Common myeloid progenitor, CD34-positive (primary cell): ENCODE measurements at regions of chr17 and their contacts with region 1.

Region 1: GRCh38 chr17:82022981-82023374 is at the start of gene LRRC45:
- DNase-seq: peak; percentile 99 to 100 (median 100)
- H3K4me3 ChIP-seq: peak within 1 kb of the TSS; percentile 64 to 85 (median 80)
- H3K27ac ChIP-seq: peak within 1 kb of the TSS in 1 of 2 experiments; percentile 76
- H3K4me1 ChIP-seq: peaks cover 0 to 40% (median 29%) of the 10 kb centered on the region in 4 experiments
- H3K27me3 ChIP-seq: no peaks in the 10 kb centered on the region

Region 2: GRCh38 chr17:81927653-81928543 is 95.1 kb before region 1 on chr17 and contains the start of gene MAFG:
- CTCF ChIA-PET with region 1: interaction called, 15 read pairs
- POLR2A ChIA-PET with region 1: interaction called, 3 read pairs
- DNase-seq: peak; percentile 92 to 95 (median 94)
- H3K4me3 ChIP-seq: peak within 1 kb of the TSS; percentile 46 to 83 (median 77)
- H3K27ac ChIP-seq: peak within 1 kb of the TSS; percentile 92 to 98
- H3K4me1 ChIP-seq: peaks cover 0 to 67% (median 58%) of the 10 kb centered on the region in 4 experiments
- H3K27me3 ChIP-seq: peaks cover 0 to 24% (median 13%) of the 10 kb centered on the region in 5 experiments

Region 3: DNA sequence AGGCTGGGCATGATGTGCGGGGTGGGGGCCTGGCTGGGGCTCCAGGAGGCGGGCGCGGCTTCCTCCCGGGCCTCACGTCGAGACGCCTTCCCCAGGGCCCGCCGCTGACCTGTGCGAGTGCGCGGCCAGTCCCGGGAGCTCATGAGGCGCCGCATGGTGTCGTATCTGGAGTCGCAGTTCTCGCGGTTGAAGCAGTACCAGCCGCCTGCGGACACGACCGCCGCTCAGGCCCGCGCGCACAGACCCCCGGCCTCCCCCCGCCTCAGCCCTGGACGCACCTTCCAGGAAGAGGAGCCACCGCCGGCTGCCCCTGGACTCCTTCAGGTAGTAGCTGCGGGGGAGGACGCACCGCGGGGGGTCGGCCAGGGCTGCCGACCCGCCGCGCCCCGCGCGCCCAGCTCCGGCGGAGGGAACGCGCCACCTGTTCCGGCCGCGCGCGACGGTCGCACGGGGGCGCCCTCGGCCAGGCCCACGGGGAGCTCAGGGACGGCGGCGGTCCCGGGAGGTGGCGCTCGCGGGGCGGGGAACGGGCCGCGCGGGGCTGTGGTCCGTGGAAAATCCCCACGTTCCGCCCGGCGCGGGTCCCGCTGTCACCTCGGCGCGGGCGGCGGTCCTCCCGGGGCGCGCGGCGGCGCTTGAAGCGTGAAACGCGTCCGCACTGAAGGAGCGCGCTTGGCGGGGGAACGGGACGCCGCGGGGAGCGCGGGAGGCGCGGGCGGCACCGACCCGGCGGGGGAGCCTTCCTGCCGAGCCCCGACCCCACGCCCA is 63.4 kb before region 1 on chr17:
- CTCF ChIA-PET with region 1: interaction called, 117 read pairs
- POLR2A ChIA-PET with region 1: interaction called, 11 read pairs
- DNase-seq: peak; percentile 54 to 73 (median 72)
- H3K4me3 ChIP-seq: peak overlapping the region in 6 of 7 experiments; percentile 9 to 61 (median 40)
- H3K27ac ChIP-seq: no peak overlapping the region
- H3K4me1 ChIP-seq: peaks cover 0 to 22% (median 19%) of the 10 kb centered on the region in 4 experiments
- H3K27me3 ChIP-seq: peaks cover 0 to 63% (median 21%) of the 10 kb centered on the region in 5 experiments

Region 4: DNA sequence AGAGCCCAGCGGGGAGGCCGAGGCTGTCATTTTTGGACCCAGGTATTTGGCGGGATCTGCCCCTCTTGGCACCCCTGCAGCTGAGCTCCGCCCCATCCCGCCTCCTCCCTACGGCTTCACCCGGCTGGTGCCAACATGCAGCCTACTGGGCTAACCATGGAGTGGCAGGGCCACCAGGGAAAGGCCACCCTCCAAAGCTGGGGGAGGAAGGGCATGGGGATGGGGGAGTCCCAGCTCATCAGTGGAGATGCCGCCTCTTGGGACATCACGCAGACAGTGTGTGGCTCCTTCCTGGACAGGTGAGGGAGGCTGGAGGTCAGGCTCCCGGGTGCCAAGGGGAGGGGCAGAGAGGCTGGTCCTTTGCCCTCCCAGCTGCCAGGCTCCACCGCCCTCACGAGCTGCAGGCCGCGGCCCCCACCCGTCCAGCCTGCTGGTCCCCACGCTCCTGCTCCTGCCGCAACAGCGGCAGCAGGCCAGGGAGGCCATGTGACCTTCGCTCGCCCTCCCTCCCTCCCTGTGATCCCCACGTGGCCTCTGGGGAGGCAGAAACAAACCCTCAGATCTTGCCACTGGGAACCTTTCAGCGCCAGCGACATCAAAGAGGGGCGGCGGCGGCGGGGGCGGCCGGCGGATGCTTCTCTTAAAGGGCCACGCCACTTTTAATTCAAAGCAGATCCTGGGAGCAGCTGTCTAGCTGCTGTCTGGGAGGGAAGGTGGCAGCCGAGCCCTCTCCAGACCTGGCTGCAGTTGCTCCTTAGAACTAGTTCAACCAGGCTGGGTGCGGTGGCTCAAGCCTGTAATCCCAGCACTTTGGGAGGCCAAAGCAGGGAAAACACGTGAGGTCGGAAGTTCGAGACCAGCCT is 55.2 kb before region 1 on chr17:
- CTCF ChIA-PET with region 1: interaction called, 117 read pairs
- POLR2A ChIA-PET with region 1: no interaction called
- DNase-seq: peak; percentile 79 to 93 (median 89)
- H3K4me3 ChIP-seq: peak overlapping the region in 4 of 7 experiments; percentile 9 to 60 (median 26)
- H3K27ac ChIP-seq: no peak overlapping the region
- H3K4me1 ChIP-seq: peaks cover 0 to 38% (median 32%) of the 10 kb centered on the region in 4 experiments
- H3K27me3 ChIP-seq: peaks cover 0 to 13% (median 7%) of the 10 kb centered on the region in 5 experiments

Region 5: GRCh38 chr17:81977211-81978027 is 45.6 kb before region 1 on chr17 and contains the start of gene ASPSCR1:
- CTCF ChIA-PET with region 1: interaction called, 10 read pairs
- POLR2A ChIA-PET with region 1: interaction called, 4 read pairs
- DNase-seq: peak; percentile 88 to 92 (median 91)
- H3K4me3 ChIP-seq: peak within 1 kb of the TSS; percentile 63 to 86 (median 73)
- H3K27ac ChIP-seq: peak within 1 kb of the TSS; percentile 64 to 85
- H3K4me1 ChIP-seq: peaks cover 10 to 49% (median 35%) of the 10 kb centered on the region in 4 experiments
- H3K27me3 ChIP-seq: peaks cover 0 to 3% (median 0%) of the 10 kb centered on the region in 5 experiments

Region 6: DNA sequence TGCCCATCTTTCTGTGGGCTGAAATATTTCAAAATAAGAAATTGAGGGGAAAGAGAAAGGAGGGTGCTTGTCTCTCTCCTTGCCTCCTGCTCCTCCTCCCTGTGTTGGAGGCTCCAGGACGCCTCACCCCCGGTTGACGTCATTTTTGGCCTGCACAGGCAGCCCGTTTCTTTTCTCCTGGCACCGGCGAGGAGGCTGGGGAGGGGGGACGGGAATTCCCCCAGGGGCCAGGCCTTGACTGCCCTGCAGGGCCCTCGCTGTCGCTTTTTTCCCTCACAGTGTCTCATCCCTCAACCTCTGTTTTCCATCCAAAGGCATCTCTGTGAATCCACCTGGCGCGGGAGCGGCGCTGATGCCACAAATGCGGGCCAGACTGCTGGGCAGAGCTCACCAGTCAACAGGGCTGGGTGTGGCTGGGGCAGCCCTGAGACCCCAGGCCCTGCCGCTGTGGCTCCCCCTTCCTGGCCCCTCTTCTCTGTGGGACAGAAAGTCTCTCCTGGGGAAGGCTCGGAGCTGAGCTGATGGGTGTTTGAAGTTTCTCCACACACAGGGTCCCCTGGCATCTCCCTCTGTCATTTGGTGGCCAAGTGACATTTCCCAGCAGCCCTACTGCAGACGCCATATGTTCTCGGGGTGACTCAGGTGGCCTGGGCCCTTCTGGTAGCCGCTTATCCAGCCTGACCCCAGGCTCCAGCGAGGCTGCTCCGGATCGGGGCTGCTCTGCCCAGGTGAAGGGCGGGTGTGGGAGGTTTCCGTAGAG is 16.3 kb before region 1 on chr17:
- CTCF ChIA-PET with region 1: interaction called, 30 read pairs
- POLR2A ChIA-PET with region 1: no interaction called
- DNase-seq: no peak
- H3K4me3 ChIP-seq: no peak overlapping the region
- H3K27ac ChIP-seq: no peak overlapping the region
- H3K4me1 ChIP-seq: peaks cover 0 to 26% (median 12%) of the 10 kb centered on the region in 4 experiments
- H3K27me3 ChIP-seq: no peaks in the 10 kb centered on the region